Left cardiac atrium (tissue), 4 donors: ENCODE measurements at regions of chr14 and their contacts with region 1.

Region 1: GRCh38 chr14:37903343-37904191 is 304.1 kb upstream of the SSTR1 start:
- DNase-seq: no peak
- ATAC-seq: peak in 1 of 2 donors; percentile 29

Region 2: GRCh38 chr14:38079268-38079667 is 175.7 kb after region 1 on chr14:
- intact Hi-C with region 1: no loop called
- DNase-seq: no peak
- ATAC-seq: no peak

Region 3: GRCh38 chr14:38197001-38197783 is 293.6 kb after region 1 on chr14:
- intact Hi-C with region 1: loop called in 1 of 2 experiments (anchors 10 kb)
- DNase-seq: no peak
- ATAC-seq: no peak

Region 4: GRCh38 chr14:38867561-38868150 is 964.1 kb after region 1 on chr14:
- intact Hi-C with region 1: loop called in 1 of 2 experiments (anchors 5 kb)
- DNase-seq: peak; percentile 77
- ATAC-seq: peak; percentile 83 to 92

Region 5: DNA sequence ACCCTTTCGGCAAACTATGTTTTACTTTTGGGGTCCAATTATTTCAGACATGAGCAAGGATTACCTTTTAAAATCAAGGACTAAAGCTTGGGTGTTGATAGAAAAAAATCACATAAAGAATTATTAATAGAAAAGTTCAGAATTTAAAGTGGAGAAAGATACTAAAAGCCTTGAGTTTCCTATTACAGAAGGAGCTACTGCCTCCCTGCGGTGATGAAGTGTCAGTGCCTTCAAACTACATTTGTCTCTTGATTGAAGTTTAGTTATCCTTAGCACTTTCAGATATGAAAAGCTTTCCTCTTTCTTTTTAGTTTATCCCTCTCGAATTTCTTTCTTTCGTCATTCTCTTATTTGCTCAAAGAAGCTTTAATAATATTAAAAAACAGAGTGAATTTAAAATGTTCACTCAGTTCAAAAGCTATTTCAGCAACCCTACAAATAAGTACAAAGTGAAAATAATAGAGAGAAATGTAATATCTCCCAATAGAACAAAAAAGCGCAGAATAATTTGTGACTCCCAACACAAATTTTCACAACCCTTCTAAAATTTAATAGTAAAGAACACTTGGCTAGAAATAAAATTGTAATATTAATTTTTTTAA is 1111.9 kb after region 1 on chr14:
- intact Hi-C with region 1: loop called in 1 of 2 experiments (anchors 5 kb)
- DNase-seq: no peak
- ATAC-seq: peak in 1 of 2 donors; percentile 56